PC-3 (cell line): ENCODE measurements at regions of chr7 and their contacts with region 1.

Region 1: GRCh38 chr7:135710417-135711138 is 17.4 kb downstream of the SLC13A4 start:
- DNase-seq: peak; percentile 6
- ATAC-seq: no peak
- H3K4me3 ChIP-seq: no peak overlapping the region
- H3K27ac ChIP-seq: no peak overlapping the region
- H3K4me1 ChIP-seq: peaks cover 36% of the 10 kb centered on the region
- H3K27me3 ChIP-seq: no peaks in the 10 kb centered on the region
- CTCF ChIP-seq: peak; percentile 37; the same call in 1 of the 2 replicates

Region 2: DNA sequence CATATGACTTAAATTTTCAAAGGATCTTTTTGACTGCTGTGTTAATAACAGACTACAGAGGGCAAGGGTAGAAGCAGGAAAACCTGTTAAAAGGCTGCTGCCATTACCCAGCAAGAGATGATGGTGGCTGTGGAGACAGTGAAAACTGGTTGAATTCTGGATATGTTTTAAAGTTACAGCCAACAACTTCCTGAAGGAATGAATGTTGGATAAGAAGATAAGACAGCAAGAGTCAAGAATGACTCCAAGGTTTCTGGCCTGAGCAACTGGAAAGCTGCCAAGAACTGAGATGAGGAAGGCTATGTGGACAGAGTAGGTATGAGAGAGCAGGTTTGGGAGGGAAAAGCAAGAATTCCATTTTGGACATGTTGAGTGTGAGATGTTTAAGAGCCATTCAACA is 219.8 kb before region 1 on chr7:
- CTCF ChIA-PET with region 1: no interaction called
- POLR2A ChIA-PET with region 1: no interaction called
- intact Hi-C with region 1: no loop called
- DNase-seq: peak; percentile 66
- ATAC-seq: peak; percentile 42; the same call in 1 of the 2 replicates
- H3K4me3 ChIP-seq: no peak overlapping the region
- H3K27ac ChIP-seq: no peak overlapping the region
- H3K4me1 ChIP-seq: peaks cover 8% of the 10 kb centered on the region
- H3K27me3 ChIP-seq: no peaks in the 10 kb centered on the region
- CTCF ChIP-seq: no peak

Region 3: DNA sequence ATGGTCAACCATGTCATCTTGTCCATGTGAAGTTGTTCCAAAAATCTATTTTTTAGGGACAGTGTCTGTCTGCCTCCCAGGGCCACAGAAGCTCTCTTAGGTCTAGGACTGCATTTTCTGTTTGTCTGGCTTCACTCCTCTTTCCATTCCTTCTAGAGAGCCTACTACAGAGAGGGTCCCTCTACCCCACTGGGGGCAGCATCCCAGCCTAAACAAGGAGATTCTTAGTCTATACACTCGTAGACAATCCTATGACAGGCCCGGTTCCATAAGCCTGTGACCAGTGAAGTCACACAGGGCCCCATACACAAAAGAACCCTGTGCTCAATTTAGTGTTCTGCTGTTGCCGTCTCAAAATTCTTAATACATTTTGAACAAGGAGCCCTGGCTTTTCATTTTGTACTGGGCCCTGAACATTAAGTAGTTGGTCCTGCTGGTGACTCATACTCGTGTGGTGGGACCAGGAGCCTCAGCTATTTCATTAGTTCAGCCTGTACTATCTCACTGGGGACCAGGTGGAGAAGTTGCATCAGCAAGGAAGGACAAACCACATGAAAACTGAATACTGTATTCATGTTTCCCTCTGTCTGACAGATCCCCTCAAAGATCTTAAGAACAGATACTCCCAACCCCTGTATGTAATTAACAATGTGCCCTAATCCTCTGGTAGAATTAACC is 61.5 kb after region 1 on chr7:
- CTCF ChIA-PET with region 1: no interaction called
- POLR2A ChIA-PET with region 1: no interaction called
- intact Hi-C with region 1: loop called (anchors 10 kb)
- DNase-seq: peak; percentile 46
- ATAC-seq: no peak; the same call in 1 of the 2 replicates
- H3K4me3 ChIP-seq: no peak overlapping the region
- H3K27ac ChIP-seq: no peak overlapping the region
- H3K4me1 ChIP-seq: peaks cover 19% of the 10 kb centered on the region
- H3K27me3 ChIP-seq: no peaks in the 10 kb centered on the region
- CTCF ChIP-seq: no peak